ENCODE measurements at regions of chr13 and their contacts with region 1.

Region 1: GRCh38 chr13:40102856-40103255 is 447.4 kb downstream of the COG6 start:
- DNase-seq: peak; percentile 84
- H3K4me3 Mint-ChIP-seq: peak overlapping the region; percentile 75
- H3K27ac Mint-ChIP-seq: peak overlapping the region; percentile 93
- H3K4me1 Mint-ChIP-seq: peaks cover 50% of the 10 kb centered on the region
- H3K27me3 Mint-ChIP-seq: no peaks in the 10 kb centered on the region

Region 2: GRCh38 chr13:39777527-39778061 is 325.3 kb before region 1 on chr13:
- intact Hi-C with region 1: loop called (anchors 1 kb)
- DNase-seq: peak; percentile 72
- H3K4me3 Mint-ChIP-seq: peak overlapping the region; percentile 47
- H3K27ac Mint-ChIP-seq: peak overlapping the region; percentile 92
- H3K4me1 Mint-ChIP-seq: peaks cover 36% of the 10 kb centered on the region
- H3K27me3 Mint-ChIP-seq: no peaks in the 10 kb centered on the region

Region 3: GRCh38 chr13:40069173-40070044 is 33.4 kb before region 1 on chr13:
- intact Hi-C with region 1: loop called (anchors 2 kb)
- DNase-seq: peak; percentile 90
- H3K4me3 Mint-ChIP-seq: no peak overlapping the region
- H3K27ac Mint-ChIP-seq: no peak overlapping the region
- H3K4me1 Mint-ChIP-seq: peaks cover 25% of the 10 kb centered on the region
- H3K27me3 Mint-ChIP-seq: no peaks in the 10 kb centered on the region

Region 4: GRCh38 chr13:40149611-40150274 is 46.9 kb after region 1 on chr13:
- intact Hi-C with region 1: loop called (anchors 2 kb)
- DNase-seq: no peak
- H3K4me3 Mint-ChIP-seq: no peak overlapping the region
- H3K27ac Mint-ChIP-seq: peak overlapping the region; percentile 42
- H3K4me1 Mint-ChIP-seq: peaks cover 49% of the 10 kb centered on the region
- H3K27me3 Mint-ChIP-seq: no peaks in the 10 kb centered on the region

Region 5: DNA sequence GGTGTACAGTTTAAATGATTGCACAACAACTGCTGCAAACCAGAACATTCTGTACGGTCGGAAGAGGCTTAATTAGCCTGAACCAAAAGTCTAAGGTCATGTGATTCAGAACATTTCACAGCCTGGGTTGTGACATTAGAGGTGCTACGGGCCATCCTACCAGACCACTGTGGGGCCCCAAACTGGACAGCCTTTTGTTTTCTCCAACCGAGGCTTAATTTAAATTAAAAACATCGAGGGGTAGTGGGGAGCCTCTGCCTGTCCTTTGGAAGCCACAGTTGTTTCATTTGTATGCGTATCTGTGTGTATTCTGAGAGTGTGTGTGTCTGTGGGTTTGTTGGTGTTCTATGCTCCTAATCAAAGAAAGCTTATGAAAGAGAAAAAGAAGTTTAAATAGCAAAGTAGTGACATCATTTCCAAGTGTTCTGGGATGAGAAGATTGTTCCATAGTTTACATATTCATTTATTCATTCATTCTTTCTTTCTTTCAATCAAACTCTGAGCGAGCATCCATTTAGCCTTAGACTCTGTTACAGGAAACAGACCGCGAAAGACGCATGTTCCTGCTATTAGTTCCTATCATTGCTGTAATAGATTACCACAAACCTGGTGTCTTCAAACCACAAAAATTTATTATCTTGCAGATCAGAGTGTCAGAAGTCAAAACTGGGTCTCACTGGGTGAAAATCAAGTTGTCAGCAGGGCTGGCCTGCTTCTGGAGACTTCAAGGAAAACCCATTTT is 118.8 kb after region 1 on chr13:
- intact Hi-C with region 1: loop called (anchors 2 kb)
- DNase-seq: peak; percentile 74
- H3K4me3 Mint-ChIP-seq: peak overlapping the region; percentile 49
- H3K27ac Mint-ChIP-seq: peak overlapping the region; percentile 45
- H3K4me1 Mint-ChIP-seq: peaks cover 36% of the 10 kb centered on the region
- H3K27me3 Mint-ChIP-seq: no peaks in the 10 kb centered on the region

Region 6: GRCh38 chr13:40371531-40372125 is 268.8 kb after region 1 on chr13:
- intact Hi-C with region 1: loop called (anchors 2 kb)
- DNase-seq: no peak
- H3K4me3 Mint-ChIP-seq: peak overlapping the region; percentile 62
- H3K27ac Mint-ChIP-seq: peak overlapping the region; percentile 54
- H3K4me1 Mint-ChIP-seq: peaks cover 39% of the 10 kb centered on the region
- H3K27me3 Mint-ChIP-seq: no peaks in the 10 kb centered on the region

Region 7: GRCh38 chr13:40974460-40975407 is 871.9 kb after region 1 on chr13:
- intact Hi-C with region 1: loop called (anchors 10 kb)
- DNase-seq: peak; percentile 82
- H3K4me3 Mint-ChIP-seq: peak overlapping the region; percentile 51
- H3K27ac Mint-ChIP-seq: peak overlapping the region; percentile 23
- H3K4me1 Mint-ChIP-seq: peaks cover 67% of the 10 kb centered on the region
- H3K27me3 Mint-ChIP-seq: no peaks in the 10 kb centered on the region